ENCODE measurements at regions of chr17 and their contacts with region 1.

Region 1: DNA sequence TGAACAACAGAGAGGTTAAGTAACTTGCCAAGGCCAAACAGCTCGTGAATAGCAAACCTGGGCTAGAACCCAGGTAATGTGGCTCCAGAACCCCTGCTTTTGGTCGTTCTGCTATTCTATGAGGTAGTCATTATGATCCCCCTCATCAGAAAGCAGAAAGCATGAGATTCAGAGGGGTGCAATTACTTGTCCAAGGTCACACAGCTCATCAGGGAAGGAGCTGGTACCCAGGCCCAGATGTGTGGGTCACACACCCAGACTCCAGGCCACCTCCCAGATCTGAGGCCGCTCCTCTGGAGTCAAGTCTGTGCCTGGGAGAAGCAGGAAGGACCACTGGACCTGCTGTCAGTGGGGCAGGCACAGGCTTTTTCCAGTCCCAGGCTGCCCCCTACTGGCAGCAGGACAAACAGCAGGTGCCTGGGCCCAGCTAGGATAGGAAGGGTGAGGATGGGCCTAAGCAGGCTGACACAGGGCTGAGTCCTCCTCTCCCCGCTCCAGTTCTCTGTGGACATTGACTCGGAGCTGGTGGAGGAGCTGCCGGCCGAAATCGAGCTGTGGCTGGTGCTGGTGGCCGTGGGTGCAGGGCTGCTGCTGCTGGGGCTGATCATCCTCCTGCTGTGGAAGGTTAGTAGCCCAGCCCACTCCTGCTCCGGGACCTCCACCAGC is 7.8 kb upstream of the PDK2 start:
- DNase-seq: peak; percentile 72
- H3K4me3 Mint-ChIP-seq: no peak overlapping the region
- H3K27ac Mint-ChIP-seq: no peak overlapping the region
- H3K4me1 Mint-ChIP-seq: no peaks in the 10 kb centered on the region
- H3K27me3 Mint-ChIP-seq: no peaks in the 10 kb centered on the region

Region 2: GRCh38 chr17:49861150-49861892 is 226.1 kb before region 1 on chr17:
- intact Hi-C with region 1: loop called (anchors 1 kb)
- DNase-seq: peak; percentile 20
- H3K4me3 Mint-ChIP-seq: no peak overlapping the region
- H3K27ac Mint-ChIP-seq: no peak overlapping the region
- H3K4me1 Mint-ChIP-seq: peaks cover 6% of the 10 kb centered on the region
- H3K27me3 Mint-ChIP-seq: peaks cover 2% of the 10 kb centered on the region

Region 3: GRCh38 chr17:50055426-50056230 is 31.8 kb before region 1 on chr17 and contains the start of gene ITGA3:
- intact Hi-C with region 1: loop called (anchors 1 kb)
- DNase-seq: peak; percentile 67
- H3K4me3 Mint-ChIP-seq: peak within 1 kb of the TSS; percentile 89
- H3K27ac Mint-ChIP-seq: peak within 1 kb of the TSS; percentile 74
- H3K4me1 Mint-ChIP-seq: peaks cover 63% of the 10 kb centered on the region
- H3K27me3 Mint-ChIP-seq: no peaks in the 10 kb centered on the region
- total RNA-seq, gene ITGA3: 18.0 and 20.6 TPM in 2 replicates

Measured in activated T-helper 1 cell treated with anti-CD3 and anti-CD28 coated beads, Interleukin-12 subunit alpha, Interleukin-12 subunit beta, Interleukin-2, Interleukin-4 antibody, amounts not matched to agents 30 ng/mL and 10 ng/mL and 1 ng/mL, durations not matched to agents 14 hours and 24 hours and 36 hours (primary cell).